ENCODE measurements at regions of chr19 and their contacts with region 1.

Region 1: GRCh38 chr19:6110360-6110977 is at the start of gene RFX2:
- DNase-seq: peak; percentile 88
- ATAC-seq: peak; percentile 99
- H3K4me3 ChIP-seq: peak within 1 kb of the TSS; percentile 73
- H3K27ac ChIP-seq: no peak within 1 kb of the TSS
- H3K4me1 ChIP-seq: 0 out of 2 replicates have a peak, but pooled peaks cover under 1% of the 10 kb centered on the region
- H3K27me3 ChIP-seq: no peaks in the 10 kb centered on the region
- CTCF ChIP-seq: no peak
- EP300 ChIP-seq: no peak; a peak in 1 of 4 replicates
- POLR2A ChIP-seq: peak; percentile 69
- RAD21 ChIP-seq: no peak
- polyA plus RNA-seq, gene RFX2: 3.2 to 4.4 TPM

Region 2: DNA sequence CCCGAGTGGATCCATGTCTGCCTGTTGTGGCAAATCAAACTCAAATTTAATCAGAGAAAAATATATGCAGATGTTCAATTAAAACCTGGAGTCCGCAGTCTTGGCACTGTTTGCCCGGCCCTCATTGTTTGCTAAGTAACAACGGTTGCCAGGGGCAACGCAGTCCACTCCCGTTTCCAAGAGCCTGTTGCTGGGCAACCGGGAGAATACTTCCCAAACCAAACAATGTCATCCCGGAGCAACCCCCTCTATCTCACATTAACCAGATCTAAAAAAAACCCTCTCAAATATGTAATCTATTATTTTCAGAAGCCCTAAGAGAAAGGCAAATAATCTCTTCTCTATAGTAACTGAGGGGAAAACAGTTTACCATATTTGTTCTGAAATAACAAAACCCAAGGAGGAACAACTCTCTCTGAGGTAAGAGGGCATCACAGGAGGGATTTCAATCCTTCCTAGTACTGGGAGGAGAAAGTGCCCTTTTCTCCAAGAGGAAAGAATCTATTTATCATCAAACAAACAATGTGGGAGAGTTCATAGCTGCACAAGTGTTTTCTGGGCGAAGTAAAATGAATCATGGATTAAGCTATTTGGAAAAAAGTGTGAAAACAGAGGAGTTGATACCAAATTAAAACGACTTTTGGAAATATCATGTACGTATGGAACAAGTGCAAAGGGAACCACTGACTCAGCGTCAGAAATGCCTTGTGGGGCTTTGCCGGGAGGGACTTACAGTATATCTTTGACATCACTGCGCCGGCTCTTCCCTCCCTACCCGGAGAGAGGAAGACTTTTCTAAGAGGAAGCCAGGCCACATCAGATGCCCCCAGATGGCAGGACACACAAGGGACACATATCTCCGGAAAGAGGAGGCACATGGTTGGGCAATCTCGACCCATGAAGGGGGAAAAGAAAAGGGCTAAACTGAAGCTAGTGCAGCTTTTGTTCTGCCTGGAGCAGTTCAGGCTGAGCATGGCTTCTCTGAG is 43.5 kb before region 1 on chr19:
- CTCF ChIA-PET with region 1: no interaction called
- POLR2A ChIA-PET with region 1: interaction called, 4 read pairs
- RAD21 ChIA-PET with region 1: no interaction called
- SMC1A ChIA-PET with region 1: interaction called, 3 read pairs
- in situ Hi-C with region 1: no loop called
- intact Hi-C with region 1: loop called (anchors 5 kb)
- DNase-seq: no peak
- ATAC-seq: peak; percentile 53
- H3K4me3 ChIP-seq: no peak overlapping the region
- H3K27ac ChIP-seq: no peak overlapping the region
- H3K4me1 ChIP-seq: no peaks in the 10 kb centered on the region
- H3K27me3 ChIP-seq: no peaks in the 10 kb centered on the region
- CTCF ChIP-seq: no peak
- EP300 ChIP-seq: peak in 1 of 2 experiments; percentile 86; a peak in 2 of 4 replicates
- POLR2A ChIP-seq: no peak
- RAD21 ChIP-seq: no peak

Region 3: DNA sequence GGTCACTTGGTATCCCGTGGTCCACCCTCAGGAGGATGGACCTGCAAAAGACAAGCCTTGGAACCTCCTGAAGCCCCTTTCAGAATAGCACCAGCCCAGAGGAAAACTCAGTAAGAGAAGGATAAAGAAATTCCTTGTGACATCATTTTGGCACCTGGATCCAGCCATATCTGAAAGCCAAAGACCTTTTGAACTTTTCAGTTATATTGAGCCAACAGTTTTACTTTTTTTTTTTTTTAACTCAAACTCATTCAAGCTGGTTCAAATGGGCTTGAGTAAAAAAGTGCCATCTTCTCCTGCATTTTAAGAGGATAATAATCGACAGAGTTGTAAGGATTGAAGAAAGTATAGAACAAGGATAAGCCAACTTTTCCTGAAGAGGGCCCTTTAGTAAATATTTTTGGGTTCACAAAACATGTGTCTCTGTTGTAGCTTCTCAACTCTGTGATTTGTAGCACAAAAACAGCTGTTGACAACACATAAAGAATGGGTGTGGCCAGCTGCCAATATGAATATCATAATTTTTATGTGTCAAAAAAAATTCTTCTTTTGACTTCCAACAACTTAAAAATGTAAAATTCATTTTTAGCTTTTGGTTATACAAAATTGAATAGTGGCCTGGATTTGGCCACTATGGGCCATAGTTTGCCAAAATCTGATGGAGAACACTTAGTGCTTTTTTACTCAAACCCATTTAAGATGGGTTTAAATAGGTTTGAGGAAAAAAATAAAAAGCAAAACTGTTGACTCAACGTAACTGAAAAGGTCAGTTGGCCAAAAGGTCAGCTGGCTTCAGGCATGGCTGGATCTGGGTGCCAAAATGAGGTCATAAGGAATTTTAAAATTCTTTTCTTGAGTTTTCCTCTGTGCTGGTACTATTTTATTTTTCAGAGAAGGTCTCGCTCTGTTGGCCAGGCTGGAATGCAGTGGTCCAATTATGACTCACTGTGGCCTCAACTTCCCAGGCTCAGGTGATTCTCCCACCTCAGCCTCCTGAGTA is 75.7 kb after region 1 on chr19:
- CTCF ChIA-PET with region 1: no interaction called
- POLR2A ChIA-PET with region 1: interaction called, 11 read pairs
- RAD21 ChIA-PET with region 1: no interaction called
- SMC1A ChIA-PET with region 1: no interaction called
- in situ Hi-C with region 1: no loop called
- intact Hi-C with region 1: no loop called
- DNase-seq: no peak
- ATAC-seq: no peak
- H3K4me3 ChIP-seq: no peak overlapping the region
- H3K27ac ChIP-seq: no peak overlapping the region
- H3K4me1 ChIP-seq: no peaks in the 10 kb centered on the region
- H3K27me3 ChIP-seq: no peaks in the 10 kb centered on the region
- CTCF ChIP-seq: no peak
- EP300 ChIP-seq: no peak
- POLR2A ChIP-seq: no peak
- RAD21 ChIP-seq: no peak